CD4-positive, alpha-beta memory T cell (primary cell): ENCODE measurements at regions of chr15 and their contacts with region 1.

Region 1: GRCh38 chr15:90539789-90540188 is 10.1 kb downstream of the CRTC3 start:
- DNase-seq: peak; percentile 44 to 67 (median 57)
- H3K4me3 ChIP-seq: peak overlapping the region; percentile 33 to 43
- H3K4me3 Mint-ChIP-seq: peak overlapping the region; percentile 88 to 96 (median 92)
- H3K27ac ChIP-seq: peak overlapping the region; percentile 74
- H3K27ac Mint-ChIP-seq: peak overlapping the region; percentile 92 to 99 (median 97)
- H3K4me1 ChIP-seq: peaks cover 86% of the 10 kb centered on the region
- H3K4me1 Mint-ChIP-seq: peaks cover 57 to 84% (median 72%) of the 10 kb centered on the region in 4 donors
- H3K27me3 ChIP-seq: no peaks in the 10 kb centered on the region
- H3K27me3 Mint-ChIP-seq: no peaks in the 10 kb centered on the region

Region 2: DNA sequence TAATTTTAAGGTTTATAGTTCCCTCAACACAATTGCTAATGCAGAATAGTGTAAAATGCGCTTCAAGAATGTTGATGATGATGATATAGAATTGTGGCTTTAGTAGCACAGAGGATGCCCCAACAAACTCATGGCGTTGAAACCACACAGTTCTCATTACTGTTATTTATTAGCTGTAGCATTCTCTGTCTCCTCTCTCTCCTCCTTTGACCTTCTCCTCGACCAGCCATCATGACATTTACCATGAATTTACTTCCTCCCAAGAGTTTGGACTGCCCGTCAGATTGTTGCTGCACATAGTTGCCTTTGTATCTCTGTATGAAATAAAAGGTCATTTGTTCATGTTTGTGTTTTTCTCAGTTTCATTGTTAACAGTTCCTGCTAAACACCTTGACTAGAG is 37.9 kb before region 1 on chr15:
- CTCF ChIA-PET with region 1: no interaction called
- POLR2A ChIA-PET with region 1: no interaction called
- intact Hi-C with region 1: no loop called
- DNase-seq: no peak
- H3K4me3 ChIP-seq: no peak overlapping the region
- H3K4me3 Mint-ChIP-seq: no peak overlapping the region
- H3K27ac ChIP-seq: no peak overlapping the region
- H3K27ac Mint-ChIP-seq: peak overlapping the region in 1 of 7 donors; percentile 41
- H3K4me1 ChIP-seq: no peaks in the 10 kb centered on the region
- H3K4me1 Mint-ChIP-seq: peaks cover 0 to 1% (median 0%) of the 10 kb centered on the region in 4 donors
- H3K27me3 ChIP-seq: no peaks in the 10 kb centered on the region
- H3K27me3 Mint-ChIP-seq: no peaks in the 10 kb centered on the region

Region 3: DNA sequence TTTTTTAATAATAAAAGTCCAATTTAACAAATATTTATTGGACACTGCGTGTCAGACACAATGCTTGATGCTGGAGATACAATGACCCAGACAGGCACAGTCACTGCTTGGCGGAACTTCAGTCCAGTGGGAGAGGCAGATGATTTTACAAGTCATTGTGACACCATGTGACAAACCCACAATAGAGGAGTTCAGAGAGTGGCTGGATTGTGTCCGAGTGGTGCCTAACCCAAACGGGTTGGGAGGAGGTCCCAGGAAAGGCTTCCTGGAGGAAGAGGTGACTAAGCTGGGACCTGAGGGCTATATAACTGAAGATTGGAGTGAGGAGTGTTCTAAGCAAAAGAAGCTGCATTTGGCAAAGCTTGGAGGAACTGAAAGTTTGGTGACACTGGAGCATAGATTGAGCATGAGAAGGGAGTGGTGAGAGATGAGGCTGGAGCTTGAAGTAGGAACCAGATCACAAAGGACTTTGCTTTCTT is 31.3 kb after region 1 on chr15:
- CTCF ChIA-PET with region 1: interaction called, 3 read pairs
- POLR2A ChIA-PET with region 1: interaction called, 10 read pairs
- intact Hi-C with region 1: no loop called
- DNase-seq: no peak
- H3K4me3 ChIP-seq: no peak overlapping the region
- H3K4me3 Mint-ChIP-seq: peak overlapping the region in 5 of 8 donors; percentile 3 to 56 (median 43)
- H3K27ac ChIP-seq: no peak overlapping the region
- H3K27ac Mint-ChIP-seq: peak overlapping the region in 6 of 7 donors; percentile 4 to 89 (median 43)
- H3K4me1 ChIP-seq: peaks cover 89% of the 10 kb centered on the region
- H3K4me1 Mint-ChIP-seq: peaks cover 45 to 82% (median 61%) of the 10 kb centered on the region in 4 donors
- H3K27me3 ChIP-seq: no peaks in the 10 kb centered on the region
- H3K27me3 Mint-ChIP-seq: no peaks in the 10 kb centered on the region

Region 4: GRCh38 chr15:90603893-90604292 is 64.1 kb after region 1 on chr15:
- CTCF ChIA-PET with region 1: interaction called, 15 read pairs
- POLR2A ChIA-PET with region 1: interaction called, 4 read pairs
- intact Hi-C with region 1: no loop called
- DNase-seq: peak in 4 of 5 donors; percentile 22 to 35 (median 30)
- H3K4me3 ChIP-seq: no peak overlapping the region
- H3K4me3 Mint-ChIP-seq: no peak overlapping the region
- H3K27ac ChIP-seq: no peak overlapping the region
- H3K27ac Mint-ChIP-seq: peak overlapping the region in 5 of 7 donors; percentile 12 to 75 (median 60)
- H3K4me1 ChIP-seq: peaks cover 19% of the 10 kb centered on the region
- H3K4me1 Mint-ChIP-seq: peaks cover 9 to 41% (median 31%) of the 10 kb centered on the region in 4 donors
- H3K27me3 ChIP-seq: no peaks in the 10 kb centered on the region
- H3K27me3 Mint-ChIP-seq: no peaks in the 10 kb centered on the region